ENCODE measurements at regions of chr7 and their contacts with region 1.

Region 1: GRCh38 chr7:130069978-130070860 is at the start of gene KLHDC10:
- DNase-seq: peak; percentile 98
- H3K4me3 ChIP-seq: peak within 1 kb of the TSS; percentile 75
- H3K4me3 Mint-ChIP-seq: peak within 1 kb of the TSS; percentile 84
- H3K27ac Mint-ChIP-seq: peak within 1 kb of the TSS; percentile 65
- H3K4me1 ChIP-seq: peaks cover 13% of the 10 kb centered on the region
- H3K4me1 Mint-ChIP-seq: peaks cover 20% of the 10 kb centered on the region
- H3K27me3 ChIP-seq: no peaks in the 10 kb centered on the region
- H3K27me3 Mint-ChIP-seq: no peaks in the 10 kb centered on the region
- CTCF ChIP-seq: no peak
- total RNA-seq, gene KLHDC10: 20.3 and 22.3 TPM in 2 replicates

Region 2: GRCh38 chr7:130114374-130115135 is 44.3 kb after region 1 on chr7:
- CTCF ChIA-PET with region 1: interaction called, 10 read pairs
- POLR2A ChIA-PET with region 1: no interaction called
- intact Hi-C with region 1: no loop called
- DNase-seq: peak in 1 of 2 experiments; percentile 11
- H3K4me3 ChIP-seq: no peak overlapping the region
- H3K4me3 Mint-ChIP-seq: no peak overlapping the region
- H3K27ac Mint-ChIP-seq: no peak overlapping the region
- H3K4me1 ChIP-seq: peaks cover 17% of the 10 kb centered on the region
- H3K4me1 Mint-ChIP-seq: peaks cover 15% of the 10 kb centered on the region
- H3K27me3 ChIP-seq: no peaks in the 10 kb centered on the region
- H3K27me3 Mint-ChIP-seq: no peaks in the 10 kb centered on the region
- CTCF ChIP-seq: no peak

Region 3: DNA sequence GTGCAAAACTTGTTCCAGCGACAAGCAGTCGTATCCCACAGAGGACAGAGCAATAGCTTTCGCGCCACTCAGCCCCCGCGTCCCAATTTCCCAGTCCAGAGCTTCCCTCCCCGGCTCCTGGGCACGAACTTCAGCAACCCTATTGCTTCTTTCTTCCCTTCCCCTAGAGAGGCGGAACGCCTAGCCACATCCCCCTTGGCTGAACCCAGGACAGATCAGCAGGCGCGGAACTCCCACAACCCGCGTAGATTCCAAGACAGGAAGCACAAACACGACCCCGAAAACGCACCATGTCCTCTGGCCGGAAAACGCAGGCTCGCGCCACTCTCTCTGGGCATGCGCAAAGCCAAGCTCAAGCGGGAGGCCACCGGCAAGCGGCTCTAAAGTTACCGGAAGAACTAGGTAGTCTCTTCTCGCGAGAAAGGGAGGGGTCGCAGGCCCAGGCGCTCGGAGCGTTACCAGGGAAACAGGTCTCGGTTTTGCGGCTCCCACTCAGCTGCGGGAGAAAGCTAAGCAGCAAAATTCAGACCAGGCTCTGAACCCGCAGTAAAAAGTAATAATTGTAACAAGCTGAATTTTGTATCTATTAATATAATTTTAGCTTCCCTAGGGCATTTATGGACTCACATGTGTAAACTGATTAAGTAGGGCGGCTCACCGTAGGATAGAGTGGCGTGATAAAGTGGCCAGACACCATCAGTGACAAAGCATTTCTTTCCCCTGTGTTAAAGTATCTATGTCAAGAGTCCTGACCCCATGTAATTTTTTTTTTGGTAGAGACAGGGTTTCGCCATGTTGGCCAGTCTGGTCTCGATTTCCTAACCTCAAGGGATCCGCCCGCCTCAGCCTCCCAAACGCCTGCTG is 135.1 kb after region 1 on chr7 and contains the start of gene TMEM209:
- CTCF ChIA-PET with region 1: interaction called, 5 read pairs
- POLR2A ChIA-PET with region 1: interaction called, 23 read pairs
- intact Hi-C with region 1: loop called (anchors 1 kb)
- DNase-seq: peak; percentile 98
- H3K4me3 ChIP-seq: peak within 1 kb of the TSS; percentile 62
- H3K4me3 Mint-ChIP-seq: peak within 1 kb of the TSS; percentile 98
- H3K27ac Mint-ChIP-seq: peak within 1 kb of the TSS; percentile 99
- H3K4me1 ChIP-seq: peaks cover 7% of the 10 kb centered on the region
- H3K4me1 Mint-ChIP-seq: no peaks in the 10 kb centered on the region
- H3K27me3 ChIP-seq: no peaks in the 10 kb centered on the region
- H3K27me3 Mint-ChIP-seq: no peaks in the 10 kb centered on the region
- CTCF ChIP-seq: no peak
- total RNA-seq, gene TMEM209: 32.8 and 34.5 TPM in 2 replicates

Region 4: DNA sequence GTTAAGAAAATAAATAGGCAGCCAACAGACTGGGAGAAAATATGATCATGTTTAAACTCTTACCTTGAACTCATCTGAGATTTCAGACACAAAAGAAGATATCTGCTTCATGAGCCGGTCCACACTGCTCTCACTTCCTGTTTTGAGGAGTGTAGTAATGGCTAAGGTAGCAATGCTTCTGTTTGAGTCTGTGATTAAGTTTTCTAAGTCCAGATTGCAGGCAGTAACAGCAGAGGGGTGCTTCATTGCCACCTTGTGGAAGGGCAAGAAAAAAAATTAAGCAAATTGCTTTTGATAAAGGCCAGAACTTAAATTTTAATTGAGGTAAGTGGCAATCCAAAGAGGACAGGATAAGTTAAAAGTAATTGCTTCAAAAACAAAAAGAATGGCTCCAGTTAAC is 490.8 kb after region 1 on chr7:
- CTCF ChIA-PET with region 1: no interaction called
- POLR2A ChIA-PET with region 1: no interaction called
- intact Hi-C with region 1: loop called (anchors 2 kb)
- DNase-seq: peak in 1 of 2 experiments; percentile 25
- H3K4me3 ChIP-seq: no peak overlapping the region
- H3K4me3 Mint-ChIP-seq: no peak overlapping the region
- H3K27ac Mint-ChIP-seq: no peak overlapping the region
- H3K4me1 ChIP-seq: no peaks in the 10 kb centered on the region
- H3K4me1 Mint-ChIP-seq: no peaks in the 10 kb centered on the region
- H3K27me3 ChIP-seq: no peaks in the 10 kb centered on the region
- H3K27me3 Mint-ChIP-seq: no peaks in the 10 kb centered on the region
- CTCF ChIP-seq: peak in 1 of 2 experiments; percentile 43

Region 5: GRCh38 chr7:130758429-130759056 is 688.3 kb after region 1 on chr7:
- CTCF ChIA-PET with region 1: interaction called, 11 read pairs
- POLR2A ChIA-PET with region 1: no interaction called
- intact Hi-C with region 1: loop called (anchors 1 kb)
- DNase-seq: peak in 1 of 2 experiments; percentile 28
- H3K4me3 ChIP-seq: no peak overlapping the region
- H3K4me3 Mint-ChIP-seq: no peak overlapping the region
- H3K27ac Mint-ChIP-seq: no peak overlapping the region
- H3K4me1 ChIP-seq: no peaks in the 10 kb centered on the region
- H3K4me1 Mint-ChIP-seq: no peaks in the 10 kb centered on the region
- H3K27me3 ChIP-seq: no peaks in the 10 kb centered on the region
- H3K27me3 Mint-ChIP-seq: peaks cover 13% of the 10 kb centered on the region
- CTCF ChIP-seq: peak; percentile 65 to 69